GM10248 (cell line): ENCODE measurements at regions of chr1 and their contacts with region 1.

Region 1: GRCh38 chr1:86833461-86834215 is 80.3 kb downstream of the SELENOF start:
- DNase-seq: peak; percentile 74
- CTCF ChIP-seq: peak; percentile 67

Region 2: GRCh38 chr1:86846166-86846647 is 12.6 kb after region 1 on chr1:
- CTCF ChIA-PET with region 1: interaction called, 11 read pairs
- POLR2A ChIA-PET with region 1: no interaction called
- DNase-seq: no peak
- CTCF ChIP-seq: no peak

Region 3: GRCh38 chr1:86852782-86853408 is 19.3 kb after region 1 on chr1:
- CTCF ChIA-PET with region 1: interaction called, 11 read pairs
- POLR2A ChIA-PET with region 1: no interaction called
- DNase-seq: no peak
- CTCF ChIP-seq: no peak

Region 4: DNA sequence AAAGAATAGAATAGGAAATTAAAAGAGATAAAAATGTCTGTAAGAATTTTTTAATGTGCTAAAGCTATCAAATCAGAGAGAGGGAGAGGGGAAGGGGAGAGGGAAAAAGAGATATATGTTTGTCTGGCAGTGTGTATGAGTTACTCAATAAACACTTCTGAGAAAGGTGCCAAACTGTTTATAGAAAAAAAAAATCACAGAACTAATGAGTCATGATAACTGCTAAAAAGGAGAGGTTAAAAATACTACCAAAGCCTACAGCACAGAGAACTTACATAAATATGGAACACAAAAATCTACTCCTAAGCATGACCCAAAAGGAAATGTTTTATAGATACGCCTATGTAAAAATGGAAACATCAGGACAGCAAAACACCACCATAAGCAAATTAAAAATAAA is 34.8 kb after region 1 on chr1:
- CTCF ChIA-PET with region 1: no interaction called
- POLR2A ChIA-PET with region 1: no interaction called
- DNase-seq: no peak
- CTCF ChIP-seq: no peak